Colonic mucosa (tissue), 4 donors: ENCODE measurements at regions of chr6 and their contacts with region 1.

Region 1: DNA sequence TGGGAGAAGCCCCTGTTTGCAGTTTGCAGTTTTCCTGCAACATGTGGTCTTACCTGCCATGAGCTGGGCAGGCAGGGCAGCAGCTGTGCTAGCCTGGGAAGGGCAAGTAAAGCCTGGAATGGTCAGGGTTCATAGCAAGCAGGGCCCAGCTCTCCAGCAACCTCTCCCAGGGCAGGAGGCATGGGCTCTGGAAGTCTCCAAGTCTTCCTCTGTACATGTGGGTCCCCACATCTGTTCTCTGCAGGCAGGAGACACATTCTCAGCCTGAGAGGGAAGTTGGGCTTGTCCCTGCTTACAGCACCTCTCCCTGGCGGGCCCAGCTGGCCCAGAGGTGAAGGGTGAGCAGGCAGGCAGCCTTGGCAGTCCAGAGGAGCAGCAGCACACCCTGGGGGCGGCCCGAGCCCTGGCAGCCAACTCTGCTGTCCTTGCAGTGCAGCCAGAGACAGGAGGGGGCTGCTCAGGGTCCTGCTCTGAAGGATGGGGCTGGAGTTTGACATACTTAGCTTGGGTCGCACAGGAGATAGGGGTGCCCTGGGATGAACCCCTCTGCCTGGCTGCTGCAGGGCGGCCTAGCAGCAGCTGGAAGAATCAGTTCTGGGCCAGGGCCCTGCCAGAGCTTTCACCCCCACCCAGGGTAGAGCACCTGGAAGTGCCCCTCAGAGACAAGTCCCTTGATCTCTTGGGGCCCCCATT is 176.0 kb downstream of the MRPL14 start:
- DNase-seq: peak; percentile 75
- H3K4me3 ChIP-seq: no peak overlapping the region
- H3K27ac ChIP-seq: no peak overlapping the region
- H3K4me1 ChIP-seq: no peaks in the 10 kb centered on the region
- H3K27me3 ChIP-seq: no peaks in the 10 kb centered on the region
- CTCF ChIP-seq: peak; percentile 51

Region 2: DNA sequence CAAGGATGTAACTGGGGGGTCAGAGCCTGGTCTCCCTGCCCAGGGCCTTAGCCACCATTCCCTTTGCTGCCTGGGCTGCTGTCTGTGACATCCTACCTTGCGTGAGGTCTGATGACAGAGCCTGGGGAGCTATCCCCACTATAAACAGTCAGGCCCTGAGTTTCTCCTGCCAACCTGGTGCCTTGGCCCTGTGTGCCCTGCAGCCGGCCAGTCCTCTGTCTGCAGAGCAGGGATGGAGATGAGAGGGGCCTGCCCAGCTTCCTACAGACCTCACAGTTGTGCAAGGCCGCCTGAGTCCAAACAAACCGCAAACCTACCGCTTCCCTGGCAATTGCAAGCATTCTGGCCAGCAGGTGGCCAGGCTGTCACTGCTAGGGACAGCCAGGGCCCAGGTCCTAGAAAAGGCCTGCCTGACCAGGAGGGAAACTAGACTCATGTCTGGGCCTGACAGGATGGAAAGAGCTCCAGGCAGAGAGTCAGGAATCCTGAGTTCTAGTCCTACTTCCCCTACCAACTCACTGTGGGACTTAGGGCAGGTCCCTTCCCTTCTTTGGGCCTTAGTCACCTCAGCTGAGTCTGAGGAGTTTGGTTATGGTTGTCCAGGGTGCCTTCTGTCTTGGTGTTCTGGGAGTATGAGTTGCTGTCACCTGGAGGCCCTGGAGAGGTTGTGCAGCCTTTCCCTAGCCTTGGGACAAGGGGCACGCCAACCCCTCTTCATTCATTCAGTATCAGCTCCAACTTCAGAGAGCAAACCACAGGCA is 95.0 kb before region 1 on chr6:
- intact Hi-C with region 1: loop called (anchors 5 kb)
- DNase-seq: peak; percentile 43
- H3K4me3 ChIP-seq: no peak overlapping the region
- H3K27ac ChIP-seq: no peak overlapping the region
- H3K4me1 ChIP-seq: no peaks in the 10 kb centered on the region
- H3K27me3 ChIP-seq: no peaks in the 10 kb centered on the region
- CTCF ChIP-seq: peak; percentile 45

Region 3: DNA sequence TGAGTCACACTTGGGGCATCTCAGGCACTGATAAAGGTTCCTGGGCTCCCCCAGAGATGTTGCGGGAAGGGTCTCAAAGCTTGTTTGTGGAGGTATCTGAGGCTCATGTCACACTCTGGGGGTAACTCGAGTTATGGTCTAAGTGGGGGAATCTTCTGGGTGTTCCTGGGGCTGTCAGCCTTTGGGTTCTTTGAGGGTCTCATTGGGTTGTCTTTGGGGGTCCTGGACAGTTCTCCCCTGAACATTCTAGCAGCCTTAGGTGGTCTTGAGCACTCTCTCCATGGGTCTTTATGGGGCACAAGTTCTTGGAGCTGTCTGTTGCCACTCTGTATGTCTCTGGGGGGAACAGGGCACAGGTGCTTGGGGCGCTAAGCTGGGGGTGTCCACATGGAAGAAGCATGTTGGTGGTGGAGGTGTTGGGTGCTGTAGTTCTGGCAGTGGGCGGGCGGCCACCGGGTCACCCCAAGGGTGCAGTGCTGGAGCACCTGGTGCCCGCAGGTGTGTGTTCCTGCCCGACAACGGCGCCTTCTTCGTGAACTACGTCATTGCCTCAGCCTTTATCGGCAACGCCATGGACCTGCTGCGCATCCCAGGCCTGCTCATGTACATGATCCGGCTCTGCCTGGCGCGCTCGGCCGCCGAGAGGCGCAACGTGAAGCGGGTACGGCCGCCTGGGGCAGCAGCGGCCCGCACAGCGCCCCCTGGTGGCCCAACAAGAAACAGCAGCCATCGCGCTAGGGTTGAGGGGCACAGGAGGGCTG is 200.3 kb after region 1 on chr6:
- intact Hi-C with region 1: no loop called
- DNase-seq: peak; percentile 77
- H3K4me3 ChIP-seq: no peak overlapping the region
- H3K27ac ChIP-seq: no peak overlapping the region
- H3K4me1 ChIP-seq: no peaks in the 10 kb centered on the region
- H3K27me3 ChIP-seq: no peaks in the 10 kb centered on the region
- CTCF ChIP-seq: peak; percentile 99